ENCODE measurements at regions of chr21 and their contacts with region 1.

Region 1: GRCh38 chr21:42009831-42010523 is at the start of gene ZBTB21:
- DNase-seq: peak; percentile 97 to 98 (median 97)
- H3K4me3 ChIP-seq: peak within 1 kb of the TSS; percentile 72 to 88 (median 81)
- H3K27ac ChIP-seq: peak within 1 kb of the TSS; percentile 91 to 95
- H3K4me1 ChIP-seq: peaks cover 0 to 23% (median 15%) of the 10 kb centered on the region in 4 experiments
- H3K27me3 ChIP-seq: no peaks in the 10 kb centered on the region

Region 2: GRCh38 chr21:41802684-41803083 is 207.3 kb before region 1 on chr21:
- CTCF ChIA-PET with region 1: no interaction called
- POLR2A ChIA-PET with region 1: no interaction called
- DNase-seq: peak in 2 of 3 donors; percentile 29 to 48
- H3K4me3 ChIP-seq: no peak overlapping the region
- H3K27ac ChIP-seq: no peak overlapping the region
- H3K4me1 ChIP-seq: peaks cover 0 to 21% (median 10%) of the 10 kb centered on the region in 4 experiments
- H3K27me3 ChIP-seq: no peaks in the 10 kb centered on the region

Region 3: GRCh38 chr21:42027822-42028765 is 18.1 kb after region 1 on chr21:
- CTCF ChIA-PET with region 1: interaction called, 3 read pairs
- POLR2A ChIA-PET with region 1: interaction called, 17 read pairs
- DNase-seq: peak; percentile 18 to 89 (median 82)
- H3K4me3 ChIP-seq: peak overlapping the region in 1 of 7 experiments; percentile 5
- H3K27ac ChIP-seq: peak overlapping the region in 1 of 2 experiments; percentile 15
- H3K4me1 ChIP-seq: peaks cover 4 to 47% (median 37%) of the 10 kb centered on the region in 4 experiments
- H3K27me3 ChIP-seq: no peaks in the 10 kb centered on the region

Region 4: DNA sequence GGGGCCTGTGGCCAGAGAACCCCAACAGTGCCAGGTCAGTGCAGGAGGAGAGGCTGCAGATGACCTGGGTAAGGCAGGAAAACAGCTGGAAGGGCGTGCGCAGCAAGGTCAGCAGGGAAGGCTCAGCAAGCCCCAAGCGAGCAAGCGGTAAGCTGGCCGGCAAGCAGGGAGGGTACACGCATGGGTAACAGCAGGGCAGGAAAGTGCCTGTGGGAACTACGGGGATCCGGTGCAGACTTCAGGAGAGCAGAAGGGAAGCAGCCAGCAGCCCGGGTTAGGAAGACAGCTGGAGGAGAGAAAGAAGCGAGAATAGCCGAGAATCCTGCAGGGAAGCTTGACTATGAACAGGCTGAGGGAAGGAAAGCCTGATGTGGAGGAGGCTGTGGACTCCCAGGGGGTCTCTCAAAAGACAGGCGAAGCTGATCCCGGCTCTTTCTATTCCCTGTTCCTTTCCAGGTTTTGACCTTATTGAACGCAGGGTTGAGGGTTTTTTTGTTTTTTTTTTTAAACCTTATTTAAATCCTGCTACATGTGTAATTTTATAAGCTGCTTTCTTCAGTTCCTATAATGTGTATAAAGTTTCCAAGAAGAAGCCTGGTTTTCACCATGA is 82.0 kb after region 1 on chr21:
- CTCF ChIA-PET with region 1: no interaction called
- POLR2A ChIA-PET with region 1: no interaction called
- DNase-seq: no peak
- H3K4me3 ChIP-seq: no peak overlapping the region
- H3K27ac ChIP-seq: no peak overlapping the region
- H3K4me1 ChIP-seq: peaks cover 0 to 15% (median 4%) of the 10 kb centered on the region in 4 experiments
- H3K27me3 ChIP-seq: no peaks in the 10 kb centered on the region